ENCODE measurements at regions of chr18 and their contacts with region 1.

Region 1: GRCh38 chr18:46010676-46011075 is 43.5 kb upstream of the EPG5 start:
- DNase-seq: no peak
- ATAC-seq: no peak
- H3K4me3 ChIP-seq: no peak overlapping the region
- H3K4me3 Mint-ChIP-seq: no peak overlapping the region
- H3K27ac ChIP-seq: no peak overlapping the region
- H3K27ac Mint-ChIP-seq: no peak overlapping the region
- H3K4me1 ChIP-seq: no peaks in the 10 kb centered on the region
- H3K4me1 Mint-ChIP-seq: peaks cover 0 to 11% (median 0%) of the 10 kb centered on the region in 7 donors
- H3K27me3 ChIP-seq: no peaks in the 10 kb centered on the region
- H3K27me3 Mint-ChIP-seq: no peaks in the 10 kb centered on the region

Region 2: DNA sequence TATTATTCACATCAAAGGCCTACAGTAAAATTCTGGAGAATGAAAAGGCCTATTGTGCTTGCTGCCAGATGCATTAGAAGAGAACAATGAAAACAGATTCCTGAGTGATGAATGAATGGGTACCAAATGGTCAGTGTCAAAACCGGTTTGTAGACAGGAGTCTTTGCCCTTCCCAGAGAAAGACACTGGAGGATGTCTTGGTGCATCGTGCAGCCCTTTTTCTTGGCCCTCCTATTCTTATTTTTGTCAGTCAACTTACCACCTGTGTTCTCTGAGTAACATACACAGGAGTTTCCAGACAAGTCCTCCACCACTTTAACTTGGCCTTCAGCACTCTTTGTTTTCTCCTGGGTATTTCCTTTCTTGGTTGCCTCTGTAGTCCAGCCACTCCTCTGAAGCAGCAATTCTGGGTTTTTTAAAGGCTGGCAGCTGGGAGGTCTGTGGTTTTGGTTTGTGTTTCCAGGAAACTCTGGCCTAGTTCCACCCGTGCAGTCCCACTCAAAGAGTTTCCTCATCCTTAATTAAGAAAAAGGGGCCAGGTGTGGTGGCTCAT is 32.0 kb after region 1 on chr18:
- CTCF ChIA-PET with region 1: no interaction called
- POLR2A ChIA-PET with region 1: no interaction called
- intact Hi-C with region 1: loop called in 1 of 2 experiments (anchors 1 kb)
- DNase-seq: no peak
- ATAC-seq: no peak
- H3K4me3 ChIP-seq: no peak overlapping the region
- H3K4me3 Mint-ChIP-seq: peak overlapping the region; percentile 27 to 82 (median 58)
- H3K27ac ChIP-seq: no peak overlapping the region
- H3K27ac Mint-ChIP-seq: peak overlapping the region; percentile 44 to 89 (median 75)
- H3K4me1 ChIP-seq: peaks cover 24 to 40% of the 10 kb centered on the region in 2 donors
- H3K4me1 Mint-ChIP-seq: peaks cover 29 to 62% (median 55%) of the 10 kb centered on the region in 7 donors
- H3K27me3 ChIP-seq: no peaks in the 10 kb centered on the region
- H3K27me3 Mint-ChIP-seq: no peaks in the 10 kb centered on the region